ENCODE measurements at regions of chr3 and their contacts with region 1.

Region 1: DNA sequence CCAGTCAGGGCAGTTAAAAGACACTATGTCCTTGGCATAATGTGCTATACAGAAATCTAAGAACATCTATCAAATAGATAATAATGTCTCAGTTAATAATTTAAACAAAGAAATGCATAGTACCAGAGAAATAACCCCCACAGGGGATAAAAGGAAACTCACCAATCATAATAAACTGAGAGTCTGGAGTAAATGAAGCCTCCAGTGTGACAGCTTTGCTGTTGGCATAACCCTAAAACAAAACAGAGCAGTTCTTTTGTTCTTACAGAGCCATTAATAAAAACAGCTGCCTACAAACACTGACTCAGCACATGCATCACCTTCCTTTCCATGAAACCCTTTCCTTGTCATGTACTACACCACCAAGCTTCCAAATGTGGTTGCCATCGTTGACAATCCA is 13.5 kb downstream of the PPM1M start:
- DNase-seq: no peak
- ATAC-seq: no peak
- H3K4me3 ChIP-seq: no peak overlapping the region
- H3K27ac ChIP-seq: no peak overlapping the region
- H3K4me1 ChIP-seq: peaks cover 10% of the 10 kb centered on the region
- H3K27me3 ChIP-seq: no peaks in the 10 kb centered on the region
- CTCF ChIP-seq: no peak
- EP300 ChIP-seq: no peak
- POLR2A ChIP-seq: no peak
- RAD21 ChIP-seq: no peak

Region 2: DNA sequence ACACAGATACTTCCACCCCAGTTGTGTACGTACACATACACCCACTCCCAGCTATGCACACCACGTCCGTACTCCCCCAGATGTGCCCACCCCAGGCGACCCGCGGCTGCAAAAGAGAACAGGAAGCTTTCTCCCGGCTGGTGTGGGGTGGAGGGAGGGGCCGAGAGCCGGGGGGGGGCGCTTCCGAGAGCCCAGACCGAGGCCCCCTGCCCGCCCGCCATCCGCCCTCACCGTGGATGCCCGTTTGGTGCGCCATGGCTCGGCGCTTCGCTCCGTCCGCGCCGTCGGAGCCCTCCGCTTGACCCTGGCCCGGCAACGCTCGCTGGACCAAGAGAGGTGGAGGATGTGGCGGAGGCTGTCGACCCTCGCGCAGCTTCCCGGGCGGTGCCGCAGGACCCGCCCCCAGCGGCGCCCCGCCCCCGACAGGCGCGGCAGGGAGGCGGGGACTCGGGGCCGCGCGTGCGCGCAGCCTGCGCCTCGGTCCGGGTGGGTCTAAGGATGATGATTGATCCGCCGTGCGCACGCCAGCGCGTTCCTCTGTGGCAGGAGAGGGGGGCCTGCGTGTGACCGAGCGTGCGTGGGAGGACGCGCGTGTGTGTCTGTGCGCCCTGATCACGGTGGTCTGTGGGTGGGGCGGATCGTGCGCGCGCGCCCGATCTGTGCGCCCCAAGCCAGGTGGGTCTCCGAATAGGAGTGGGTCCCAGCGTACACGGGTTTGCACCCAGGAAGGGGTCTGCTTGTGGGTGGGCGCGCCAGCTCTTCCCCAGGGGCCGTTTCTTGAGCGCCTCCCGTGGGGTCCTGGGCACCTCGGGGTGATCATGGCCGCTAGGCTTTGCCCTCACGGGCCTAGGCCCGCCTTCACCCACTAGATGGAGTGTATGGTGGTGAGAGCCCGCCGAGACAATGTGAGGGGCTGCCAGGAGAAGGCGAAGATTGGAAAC is 20.0 kb before region 1 on chr3 and contains the start of gene TWF2:
- CTCF ChIA-PET with region 1: interaction called, 14 read pairs
- POLR2A ChIA-PET with region 1: interaction called, 49 read pairs
- RAD21 ChIA-PET with region 1: interaction called, 11 read pairs
- SMC1A ChIA-PET with region 1: interaction called, 22 read pairs
- in situ Hi-C with region 1: no loop called
- intact Hi-C with region 1: no loop called
- DNase-seq: no peak
- ATAC-seq: peak; percentile 87
- H3K4me3 ChIP-seq: peak within 1 kb of the TSS; percentile 93
- H3K27ac ChIP-seq: peak within 1 kb of the TSS; percentile 88
- H3K4me1 ChIP-seq: peaks cover 40% of the 10 kb centered on the region
- H3K27me3 ChIP-seq: no peaks in the 10 kb centered on the region
- CTCF ChIP-seq: peak; percentile 43 to 49 (median 43)
- EP300 ChIP-seq: no peak
- POLR2A ChIP-seq: peak; percentile 91
- RAD21 ChIP-seq: peak; percentile 30; the same call in 1 of the 2 replicates
- polyA plus RNA-seq, gene TWF2: 0.16 to 3.4 TPM

Region 3: GRCh38 chr3:52270252-52270754 is 11.3 kb after region 1 on chr3:
- CTCF ChIA-PET with region 1: interaction called, 5 read pairs
- POLR2A ChIA-PET with region 1: interaction called, 11 read pairs
- RAD21 ChIA-PET with region 1: interaction called, 4 read pairs
- SMC1A ChIA-PET with region 1: interaction called, 8 read pairs
- in situ Hi-C with region 1: no loop called
- intact Hi-C with region 1: no loop called
- DNase-seq: no peak
- ATAC-seq: no peak
- H3K4me3 ChIP-seq: peak overlapping the region; percentile 0; the same call in 1 of the 2 replicates
- H3K27ac ChIP-seq: no peak overlapping the region; the same call in 1 of the 2 replicates
- H3K4me1 ChIP-seq: peaks cover 10% of the 10 kb centered on the region
- H3K27me3 ChIP-seq: no peaks in the 10 kb centered on the region
- CTCF ChIP-seq: no peak
- EP300 ChIP-seq: no peak
- POLR2A ChIP-seq: no peak
- RAD21 ChIP-seq: no peak